ENCODE measurements at regions of chr22 and their contacts with region 1.

Region 1: DNA sequence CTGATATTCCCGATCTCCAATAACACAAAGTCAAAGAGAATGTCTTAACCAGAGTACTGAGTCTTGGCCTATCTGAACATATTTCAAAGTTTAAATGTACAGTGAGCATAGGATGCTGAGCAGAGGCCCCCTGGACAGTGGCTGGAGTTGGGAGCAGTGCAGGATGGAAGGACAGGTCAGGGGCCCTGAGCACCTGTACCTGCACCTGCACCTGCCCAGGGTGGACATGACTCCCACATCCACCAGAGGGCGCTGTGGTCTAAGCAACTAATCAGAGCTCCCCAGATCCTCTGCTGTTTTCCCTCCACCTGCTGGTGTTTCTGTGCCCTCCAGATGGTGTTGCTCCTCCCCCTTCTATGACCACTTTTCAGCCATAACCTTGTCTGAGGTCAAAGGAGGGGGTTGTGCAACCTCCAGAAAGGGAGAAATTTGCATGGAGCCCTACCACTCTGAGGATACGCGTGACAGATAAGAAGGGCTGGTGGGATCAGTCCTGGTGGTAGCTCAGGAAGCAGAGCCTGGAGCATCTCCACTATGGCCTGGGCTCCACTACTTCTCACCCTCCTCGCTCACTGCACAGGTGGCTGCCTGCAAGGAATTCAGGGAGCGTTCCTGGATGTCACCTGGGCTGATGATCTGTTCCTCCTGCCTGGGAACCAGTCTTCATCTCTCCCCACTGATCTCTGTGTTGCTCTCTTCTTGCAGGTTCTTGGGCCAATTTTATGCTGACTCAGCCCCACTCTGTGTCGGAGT is 49.1 kb upstream of the VPREB1 start:
- H3K4me3 ChIP-seq: no peak overlapping the region
- H3K27ac ChIP-seq: no peak overlapping the region
- H3K4me1 ChIP-seq: no peaks in the 10 kb centered on the region
- CTCF ChIP-seq: peak; percentile 84

Region 2: GRCh38 chr22:21990445-21991303 is 204.8 kb before region 1 on chr22:
- CTCF ChIA-PET with region 1: no interaction called
- POLR2A ChIA-PET with region 1: no interaction called
- H3K4me3 ChIP-seq: no peak overlapping the region
- H3K27ac ChIP-seq: no peak overlapping the region
- H3K4me1 ChIP-seq: no peaks in the 10 kb centered on the region
- CTCF ChIP-seq: no peak

Region 3: DNA sequence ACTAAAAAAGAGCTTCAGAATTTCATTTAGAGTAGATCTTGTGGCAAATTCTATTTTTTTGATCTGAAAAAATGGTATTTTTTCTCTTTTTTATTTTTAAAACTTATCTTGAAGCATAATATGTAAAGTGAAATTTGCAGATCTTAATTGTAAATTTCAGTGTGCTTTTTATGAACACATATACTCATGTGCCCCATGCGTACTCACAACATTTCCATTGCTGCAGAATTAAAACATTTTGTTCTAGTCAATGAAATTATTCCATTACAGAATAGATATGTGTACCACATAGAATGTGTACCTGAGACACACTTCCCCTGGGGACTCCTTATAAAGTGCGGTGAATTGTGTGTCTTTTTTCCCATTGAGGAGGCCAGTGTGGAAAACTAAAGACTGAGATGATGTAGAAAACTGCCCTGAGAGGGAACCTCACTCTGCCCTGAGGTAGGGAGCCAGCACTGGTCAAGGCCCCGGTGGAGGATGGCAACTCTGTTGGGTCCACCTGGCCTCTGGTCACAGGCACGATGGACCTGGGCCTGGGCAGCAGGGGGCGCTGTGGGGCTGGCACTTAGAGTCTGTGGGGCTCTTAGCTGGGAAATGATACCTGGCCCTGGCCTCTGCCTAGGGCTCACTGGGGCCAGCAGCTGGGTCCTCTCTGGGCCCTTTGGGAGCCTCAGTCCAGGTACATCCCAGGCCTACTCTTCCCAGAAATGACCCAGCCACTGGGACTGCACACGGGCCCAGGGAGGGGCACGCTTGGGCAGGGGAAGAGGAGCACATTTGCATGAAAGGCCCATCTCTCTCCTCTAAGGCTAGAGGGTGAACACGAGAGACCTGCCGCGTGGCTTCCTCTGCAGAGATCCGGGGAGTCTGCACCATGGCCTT is 135.0 kb before region 1 on chr22:
- CTCF ChIA-PET with region 1: interaction called, 13 read pairs
- POLR2A ChIA-PET with region 1: no interaction called
- H3K4me3 ChIP-seq: no peak overlapping the region
- H3K27ac ChIP-seq: no peak overlapping the region
- H3K4me1 ChIP-seq: no peaks in the 10 kb centered on the region
- CTCF ChIP-seq: peak; percentile 52

Region 4: GRCh38 chr22:22156716-22157347 is 38.6 kb before region 1 on chr22:
- CTCF ChIA-PET with region 1: interaction called, 13 read pairs
- POLR2A ChIA-PET with region 1: no interaction called
- H3K4me3 ChIP-seq: no peak overlapping the region
- H3K27ac ChIP-seq: no peak overlapping the region
- H3K4me1 ChIP-seq: no peaks in the 10 kb centered on the region
- CTCF ChIP-seq: peak; percentile 25; the same call in 1 of the 2 replicates

Region 5: GRCh38 chr22:22181341-22181850 is 14.0 kb before region 1 on chr22:
- CTCF ChIA-PET with region 1: interaction called, 76 read pairs
- POLR2A ChIA-PET with region 1: no interaction called
- H3K4me3 ChIP-seq: no peak overlapping the region
- H3K27ac ChIP-seq: no peak overlapping the region
- H3K4me1 ChIP-seq: no peaks in the 10 kb centered on the region
- CTCF ChIP-seq: no peak

Region 6: GRCh38 chr22:22213231-22213630 is 17.8 kb after region 1 on chr22:
- CTCF ChIA-PET with region 1: interaction called, 75 read pairs
- POLR2A ChIA-PET with region 1: no interaction called
- H3K4me3 ChIP-seq: no peak overlapping the region
- H3K27ac ChIP-seq: no peak overlapping the region
- H3K4me1 ChIP-seq: no peaks in the 10 kb centered on the region
- CTCF ChIP-seq: no peak

Measured in HEK293 (cell line).